Ascending aorta (tissue), 2 donors: ENCODE measurements at regions of chr12 and their contacts with region 1.

Region 1: DNA sequence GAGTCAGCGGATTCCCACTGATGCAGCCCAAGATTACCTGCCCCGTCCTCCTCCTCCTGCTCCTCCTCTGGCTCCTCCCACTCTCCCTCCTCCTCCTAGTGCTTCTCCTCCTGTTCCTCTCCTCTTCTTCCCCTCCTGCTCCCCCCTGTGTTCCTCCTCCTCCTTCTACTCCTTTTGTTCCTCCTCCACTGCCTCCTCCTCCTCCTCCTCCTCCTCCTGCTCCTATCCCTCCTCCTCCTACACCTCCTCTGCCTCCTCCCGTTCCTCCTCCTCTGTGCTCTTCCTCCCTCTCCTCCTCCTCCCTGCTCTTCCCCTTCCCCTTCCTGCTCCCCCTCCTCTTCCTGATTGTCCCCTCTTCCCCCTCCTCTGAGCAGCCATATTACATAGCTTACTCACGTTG is 141.3 kb downstream of the CACNA1C start:
- DNase-seq: no peak
- H3K4me3 ChIP-seq: no peak overlapping the region
- H3K27ac ChIP-seq: peak overlapping the region; percentile 8 to 47
- H3K4me1 ChIP-seq: peaks cover 0 to 16% of the 10 kb centered on the region in 2 donors
- H3K27me3 ChIP-seq: no peaks in the 10 kb centered on the region
- CTCF ChIP-seq: no peak

Region 2: DNA sequence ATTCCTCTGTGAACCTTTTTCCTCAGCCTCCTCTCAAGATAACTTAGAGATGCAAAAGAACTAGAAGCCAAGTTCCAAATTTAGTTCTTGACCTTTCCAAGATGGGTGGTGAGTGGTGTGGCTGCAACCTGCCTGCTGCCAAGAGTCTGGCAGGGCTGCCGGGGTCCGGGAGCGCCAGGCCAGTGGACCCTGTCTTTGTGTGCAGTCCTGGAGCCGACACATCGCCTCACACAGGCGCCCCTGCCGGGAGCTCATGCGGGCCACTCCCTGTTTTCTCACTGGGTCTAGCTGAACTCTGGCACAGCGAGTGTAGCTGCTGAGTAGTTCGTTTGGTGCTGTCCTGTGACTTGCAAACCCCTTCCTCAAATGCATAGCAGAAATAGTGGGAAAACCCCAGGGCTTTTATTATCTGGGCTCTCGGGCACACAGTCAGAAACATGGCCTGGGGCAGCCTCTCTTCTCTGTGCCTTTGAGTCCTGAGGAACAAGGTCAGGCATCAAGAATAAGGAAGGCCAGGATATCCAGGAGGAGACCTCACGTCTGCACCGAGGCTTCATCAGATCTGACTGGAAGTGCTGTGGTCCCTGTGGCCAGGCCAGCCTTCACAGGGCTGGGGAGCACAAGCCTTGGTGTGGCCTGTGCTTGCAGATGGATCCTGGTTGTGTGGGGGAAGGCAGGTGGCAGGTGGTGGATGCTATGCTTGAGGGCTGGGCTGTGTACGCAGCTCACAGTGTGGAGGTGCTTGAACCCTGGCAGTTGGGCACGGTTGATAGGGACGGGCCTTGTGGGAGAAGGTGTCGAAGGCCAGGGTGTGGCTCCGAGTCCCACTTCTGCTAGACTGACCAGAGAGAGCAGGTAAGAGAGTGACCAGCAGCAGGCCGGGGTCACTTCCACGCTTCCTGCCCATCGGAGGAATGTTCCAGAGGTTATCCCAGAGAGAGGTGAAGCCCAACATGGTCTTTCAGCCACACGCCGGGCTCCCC is 56.1 kb before region 1 on chr12:
- intact Hi-C with region 1: loop called (anchors 5 kb)
- DNase-seq: peak in 1 of 2 donors; percentile 74
- H3K4me3 ChIP-seq: peak overlapping the region in 1 of 2 donors; percentile 9
- H3K27ac ChIP-seq: peak overlapping the region; percentile 65 to 77
- H3K4me1 ChIP-seq: peaks cover 14 to 34% of the 10 kb centered on the region in 2 donors
- H3K27me3 ChIP-seq: no peaks in the 10 kb centered on the region
- CTCF ChIP-seq: peak in 1 of 3 experiments; percentile 15